ENCODE measurements at regions of chr2 and their contacts with region 1.

Region 1: GRCh38 chr2:37414470-37414949 is 70.1 kb downstream of the QPCT start:
- DNase-seq: no peak
- ATAC-seq: peak; percentile 72 to 88 (median 79)
- H3K4me3 ChIP-seq: peak overlapping the region in 3 of 12 donors; percentile 2 to 25 (median 12)
- H3K27ac ChIP-seq: peak overlapping the region in 11 of 12 donors; percentile 5 to 66 (median 39)
- H3K4me1 ChIP-seq: peaks cover 0 to 21% (median 9%) of the 10 kb centered on the region in 12 donors
- H3K27me3 ChIP-seq: no peaks in the 10 kb centered on the region
- CTCF ChIP-seq: peak; percentile 64 to 93 (median 86)
- POLR2A ChIP-seq: no peak

Region 2: GRCh38 chr2:36770542-36771287 is 643.8 kb before region 1 on chr2:
- intact Hi-C with region 1: no loop called
- DNase-seq: peak in 1 of 5 donors; percentile 28
- ATAC-seq: no peak
- H3K4me3 ChIP-seq: no peak overlapping the region
- H3K27ac ChIP-seq: no peak overlapping the region
- H3K4me1 ChIP-seq: no peaks in the 10 kb centered on the region
- H3K27me3 ChIP-seq: no peaks in the 10 kb centered on the region
- CTCF ChIP-seq: peak in 10 of 12 donors; percentile 30 to 53 (median 42)
- POLR2A ChIP-seq: no peak

Region 3: GRCh38 chr2:37436323-37436722 is 21.8 kb after region 1 on chr2:
- intact Hi-C with region 1: no loop called
- DNase-seq: no peak
- ATAC-seq: no peak
- H3K4me3 ChIP-seq: no peak overlapping the region
- H3K27ac ChIP-seq: no peak overlapping the region
- H3K4me1 ChIP-seq: no peaks in the 10 kb centered on the region
- H3K27me3 ChIP-seq: no peaks in the 10 kb centered on the region
- CTCF ChIP-seq: no peak
- POLR2A ChIP-seq: no peak

Region 4: DNA sequence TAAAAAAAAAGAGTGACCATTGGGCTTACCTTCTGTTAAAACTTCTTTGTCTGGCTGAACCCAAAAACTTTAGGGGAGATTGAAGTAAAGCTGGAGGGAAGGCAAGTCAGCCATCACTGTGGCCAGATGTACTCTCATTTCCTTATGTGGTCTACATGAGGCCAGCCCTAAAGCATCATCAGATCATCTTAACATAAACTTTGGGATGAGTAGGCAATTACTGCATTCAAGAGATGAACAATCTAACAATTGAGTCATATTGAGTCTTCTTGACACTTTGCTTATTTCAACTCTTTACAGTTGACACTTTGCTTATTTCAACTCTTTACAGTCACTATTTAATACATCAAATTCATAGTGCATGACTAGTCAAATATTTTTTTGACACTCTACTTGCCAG is 85.5 kb after region 1 on chr2:
- intact Hi-C with region 1: loop called in 1 of 10 experiments (anchors 5 kb)
- DNase-seq: no peak
- ATAC-seq: no peak
- H3K4me3 ChIP-seq: no peak overlapping the region
- H3K27ac ChIP-seq: no peak overlapping the region
- H3K4me1 ChIP-seq: peaks cover 0 to 9% (median 0%) of the 10 kb centered on the region in 12 donors
- H3K27me3 ChIP-seq: no peaks in the 10 kb centered on the region
- CTCF ChIP-seq: no peak
- POLR2A ChIP-seq: no peak

Region 5: GRCh38 chr2:37549598-37549997 is 135.1 kb after region 1 on chr2:
- intact Hi-C with region 1: loop called in 1 of 10 experiments (anchors 10 kb)
- DNase-seq: no peak
- ATAC-seq: no peak
- H3K4me3 ChIP-seq: no peak overlapping the region
- H3K27ac ChIP-seq: no peak overlapping the region
- H3K4me1 ChIP-seq: peaks cover 0 to 9% (median 0%) of the 10 kb centered on the region in 12 donors
- H3K27me3 ChIP-seq: no peaks in the 10 kb centered on the region
- CTCF ChIP-seq: no peak
- POLR2A ChIP-seq: no peak

Region 6: GRCh38 chr2:37600735-37601134 is 186.2 kb after region 1 on chr2:
- intact Hi-C with region 1: no loop called
- DNase-seq: no peak
- ATAC-seq: peak in 2 of 4 donors; percentile 22 to 30
- H3K4me3 ChIP-seq: peak overlapping the region in 2 of 12 donors; percentile 9 to 40
- H3K27ac ChIP-seq: peak overlapping the region in 1 of 12 donors; percentile 68
- H3K4me1 ChIP-seq: peaks cover 0 to 24% (median 0%) of the 10 kb centered on the region in 12 donors
- H3K27me3 ChIP-seq: no peaks in the 10 kb centered on the region
- CTCF ChIP-seq: no peak
- POLR2A ChIP-seq: no peak

Region 7: GRCh38 chr2:37648331-37649011 is 234.0 kb after region 1 on chr2:
- intact Hi-C with region 1: loop called in 2 of 10 experiments (anchors 5 to 10 kb)
- DNase-seq: peak; percentile 54 to 86 (median 78)
- ATAC-seq: peak; percentile 71 to 85 (median 77)
- H3K4me3 ChIP-seq: peak overlapping the region in 3 of 12 donors; percentile 1 to 13 (median 7)
- H3K27ac ChIP-seq: peak overlapping the region; percentile 58 to 95 (median 90)
- H3K4me1 ChIP-seq: peaks cover 28 to 100% (median 93%) of the 10 kb centered on the region in 12 donors
- H3K27me3 ChIP-seq: no peaks in the 10 kb centered on the region
- CTCF ChIP-seq: peak in 10 of 12 donors; percentile 21 to 50 (median 40)
- POLR2A ChIP-seq: no peak

Region 8: DNA sequence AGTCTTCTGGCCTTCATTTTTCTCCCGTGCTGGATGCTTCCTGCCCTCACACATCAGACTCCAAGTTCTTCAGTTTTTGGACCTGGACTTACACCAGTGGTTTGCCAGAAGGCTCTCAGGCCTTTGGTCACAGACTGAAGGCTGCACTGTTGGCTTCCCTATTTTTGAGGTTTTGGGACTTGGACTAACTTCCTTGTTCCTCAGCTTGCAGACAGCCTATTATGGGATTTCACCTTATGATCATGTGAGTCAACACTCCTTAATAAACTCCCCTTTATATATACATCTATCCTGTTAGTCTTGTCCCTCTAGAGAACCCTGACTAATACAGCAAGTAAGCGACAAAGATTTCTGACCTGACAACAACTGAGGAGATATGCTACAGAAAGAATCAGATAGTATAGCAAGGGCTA is 249.7 kb after region 1 on chr2:
- intact Hi-C with region 1: loop called in 3 of 10 experiments (anchors 10 kb)
- DNase-seq: no peak
- ATAC-seq: no peak
- H3K4me3 ChIP-seq: no peak overlapping the region
- H3K27ac ChIP-seq: peak overlapping the region in 8 of 12 donors; percentile 8 to 100 (median 82)
- H3K4me1 ChIP-seq: peaks cover 15 to 100% (median 69%) of the 10 kb centered on the region in 12 donors
- H3K27me3 ChIP-seq: no peaks in the 10 kb centered on the region
- CTCF ChIP-seq: no peak
- POLR2A ChIP-seq: no peak

Region 9: DNA sequence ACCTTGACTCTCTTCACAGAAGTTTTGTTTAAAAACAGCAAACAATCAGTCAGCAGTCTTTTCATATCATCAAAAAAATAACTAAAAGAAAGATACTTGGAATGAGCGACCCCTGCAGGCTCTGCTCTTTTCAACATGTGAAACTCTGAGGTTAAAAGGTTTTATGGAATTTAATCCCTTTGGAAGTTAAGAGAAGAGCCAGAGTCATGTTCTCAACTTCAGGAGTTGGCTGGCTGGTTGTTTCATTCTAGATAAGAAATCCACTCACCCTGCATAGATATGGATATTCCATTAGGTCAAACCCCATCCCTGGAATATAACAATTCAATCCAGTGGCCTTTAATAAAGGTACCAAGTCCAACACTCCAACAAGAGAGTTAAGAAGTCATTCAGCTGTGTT is 395.0 kb after region 1 on chr2:
- intact Hi-C with region 1: loop called in 1 of 10 experiments (anchors 5 kb)
- DNase-seq: peak in 3 of 5 donors; percentile 27 to 36 (median 32)
- ATAC-seq: peak in 3 of 4 donors; percentile 34 to 62 (median 59)
- H3K4me3 ChIP-seq: no peak overlapping the region
- H3K27ac ChIP-seq: peak overlapping the region in 9 of 12 donors; percentile 6 to 65 (median 25)
- H3K4me1 ChIP-seq: peaks cover 0 to 16% (median 11%) of the 10 kb centered on the region in 12 donors
- H3K27me3 ChIP-seq: no peaks in the 10 kb centered on the region
- CTCF ChIP-seq: peak; percentile 8 to 67 (median 50)
- POLR2A ChIP-seq: no peak